WTC11 (cell line): ENCODE measurements at regions of chr1 and their contacts with region 1.

Region 1: DNA sequence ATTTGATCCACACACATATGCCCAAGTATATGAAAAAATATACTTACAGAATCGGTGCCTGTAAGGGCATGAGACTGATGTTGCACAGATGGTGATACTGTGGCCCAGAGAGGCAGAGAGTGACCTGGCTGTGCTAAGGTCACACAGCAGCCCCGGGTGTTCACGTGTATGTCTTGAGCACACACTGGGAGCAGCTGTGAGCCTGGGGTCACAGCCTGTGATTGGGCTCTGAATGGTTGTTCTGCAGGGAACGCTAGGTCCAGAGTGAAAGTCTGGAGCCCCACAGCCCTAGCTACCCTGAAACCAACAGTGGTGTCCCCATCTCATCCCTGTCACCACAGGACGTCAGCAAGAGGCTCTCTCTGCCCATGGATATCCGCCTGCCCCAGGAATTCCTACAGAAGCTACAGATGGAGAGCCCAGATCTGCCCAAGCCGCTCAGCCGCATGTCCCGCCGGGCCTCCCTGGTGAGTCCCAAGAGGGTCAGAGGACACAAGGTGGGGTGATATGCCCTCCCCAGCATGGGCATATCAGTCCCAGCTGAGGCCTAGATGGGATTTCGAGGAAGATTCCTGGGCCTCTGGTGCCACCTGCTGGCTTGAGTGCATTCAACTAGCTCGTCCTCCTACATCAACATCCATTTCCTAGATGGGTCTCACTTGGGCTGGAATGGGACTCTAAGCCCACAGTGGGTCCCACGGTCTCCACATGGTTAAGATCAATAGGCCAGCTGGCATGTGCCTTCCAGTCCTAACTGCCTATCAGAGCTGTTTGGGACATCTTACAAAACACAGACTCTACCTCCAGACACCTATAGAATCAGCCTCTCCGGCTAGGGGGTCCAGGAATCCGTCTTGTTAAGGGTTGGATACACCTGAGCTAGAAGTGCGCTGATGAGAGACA is 19.7 kb downstream of the CDK18 start:
- DNase-seq: peak; percentile 89
- ATAC-seq: peak; percentile 29
- H3K4me3 Mint-ChIP-seq: no peak overlapping the region
- H3K27ac Mint-ChIP-seq: no peak overlapping the region
- H3K4me1 Mint-ChIP-seq: peaks cover 45% of the 10 kb centered on the region
- H3K27me3 Mint-ChIP-seq: no peaks in the 10 kb centered on the region; the same call in none of the 2 replicates
- CTCF ChIP-seq: peak; percentile 81

Region 2: GRCh38 chr1:205273551-205273982 is 250.6 kb before region 1 on chr1:
- CTCF ChIA-PET with region 1: interaction called, 19 read pairs
- POLR2A ChIA-PET with region 1: no interaction called
- DNase-seq: peak; percentile 95
- ATAC-seq: peak; percentile 78
- H3K4me3 Mint-ChIP-seq: no peak overlapping the region
- H3K27ac Mint-ChIP-seq: peak overlapping the region; percentile 83
- H3K4me1 Mint-ChIP-seq: peaks cover 17% of the 10 kb centered on the region
- H3K27me3 Mint-ChIP-seq: no peaks in the 10 kb centered on the region
- CTCF ChIP-seq: peak; percentile 97

Region 3: GRCh38 chr1:205430696-205431305 is 93.3 kb before region 1 on chr1:
- CTCF ChIA-PET with region 1: interaction called, 12 read pairs
- POLR2A ChIA-PET with region 1: no interaction called
- DNase-seq: peak; percentile 81
- ATAC-seq: peak; percentile 83
- H3K4me3 Mint-ChIP-seq: peak overlapping the region; percentile 83
- H3K27ac Mint-ChIP-seq: no peak overlapping the region
- H3K4me1 Mint-ChIP-seq: peaks cover 31% of the 10 kb centered on the region
- H3K27me3 Mint-ChIP-seq: peaks cover 82% of the 10 kb centered on the region
- CTCF ChIP-seq: peak; percentile 81

Region 4: GRCh38 chr1:205458777-205459566 is 65.2 kb before region 1 on chr1:
- CTCF ChIA-PET with region 1: interaction called, 18 read pairs
- POLR2A ChIA-PET with region 1: interaction called, 5 read pairs
- DNase-seq: peak; percentile 79
- ATAC-seq: peak; percentile 16; the same call in 1 of the 2 replicates
- H3K4me3 Mint-ChIP-seq: no peak overlapping the region
- H3K27ac Mint-ChIP-seq: no peak overlapping the region
- H3K4me1 Mint-ChIP-seq: peaks cover 23% of the 10 kb centered on the region
- H3K27me3 Mint-ChIP-seq: peaks cover 4% of the 10 kb centered on the region
- CTCF ChIP-seq: no peak

Region 5: DNA sequence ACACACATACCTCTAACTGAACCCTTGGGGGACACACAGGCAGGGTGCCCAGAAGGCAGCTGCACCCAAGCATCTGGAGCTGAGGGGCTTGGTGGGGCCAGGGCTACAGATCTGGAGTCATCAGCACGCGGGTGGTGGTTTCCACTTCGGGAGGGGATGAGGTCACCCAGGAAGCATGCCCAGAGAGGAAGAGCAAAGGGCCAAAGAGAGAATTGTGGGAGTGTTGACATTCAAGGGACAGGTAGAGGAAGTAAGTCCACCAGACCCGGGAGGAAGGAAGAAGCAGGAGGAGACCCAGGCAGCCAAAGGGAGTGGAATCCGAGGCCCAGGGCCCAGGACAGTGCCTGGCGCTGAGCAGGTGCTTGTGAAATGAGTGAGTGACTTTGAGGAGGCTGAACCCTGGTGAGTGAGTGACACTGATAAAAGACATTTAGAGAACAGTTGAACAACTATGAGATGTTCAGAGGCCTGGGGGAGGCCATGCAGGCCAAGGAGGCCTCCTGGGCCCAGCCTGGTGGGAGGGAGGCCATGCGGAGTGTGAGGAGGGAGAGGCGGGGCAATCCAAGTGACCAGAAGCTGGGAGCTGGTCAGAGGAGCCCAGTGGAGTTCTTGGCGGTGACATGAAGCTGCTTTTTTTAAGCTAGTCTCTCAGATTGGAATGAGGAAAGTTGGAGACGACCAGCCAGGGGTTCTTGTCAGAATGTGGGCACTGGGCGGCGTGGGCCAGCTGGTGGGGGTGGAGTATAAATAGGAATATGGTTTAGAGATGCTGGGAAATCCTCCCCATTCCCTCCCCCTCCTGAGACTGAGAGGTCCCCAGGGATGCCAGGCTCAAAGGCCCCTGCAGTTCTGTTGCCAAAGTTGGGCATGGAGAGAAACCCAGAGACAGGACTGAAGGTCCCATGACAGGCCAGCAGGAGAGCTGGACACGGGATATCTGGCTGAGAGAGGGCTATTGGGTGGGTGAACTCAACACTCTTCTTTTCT is 11.8 kb before region 1 on chr1:
- CTCF ChIA-PET with region 1: interaction called, 56 read pairs
- POLR2A ChIA-PET with region 1: no interaction called
- DNase-seq: no peak
- ATAC-seq: no peak
- H3K4me3 Mint-ChIP-seq: no peak overlapping the region
- H3K27ac Mint-ChIP-seq: peak overlapping the region; percentile 51
- H3K4me1 Mint-ChIP-seq: peaks cover 53% of the 10 kb centered on the region
- H3K27me3 Mint-ChIP-seq: no peaks in the 10 kb centered on the region
- CTCF ChIP-seq: no peak

Region 6: GRCh38 chr1:205568469-205569361 is 44.6 kb after region 1 on chr1:
- CTCF ChIA-PET with region 1: interaction called, 10 read pairs
- POLR2A ChIA-PET with region 1: no interaction called
- DNase-seq: no peak
- ATAC-seq: peak; percentile 19
- H3K4me3 Mint-ChIP-seq: peak overlapping the region; percentile 68
- H3K27ac Mint-ChIP-seq: no peak overlapping the region
- H3K4me1 Mint-ChIP-seq: peaks cover 12% of the 10 kb centered on the region
- H3K27me3 Mint-ChIP-seq: peaks cover 77% of the 10 kb centered on the region
- CTCF ChIP-seq: no peak

Region 7: DNA sequence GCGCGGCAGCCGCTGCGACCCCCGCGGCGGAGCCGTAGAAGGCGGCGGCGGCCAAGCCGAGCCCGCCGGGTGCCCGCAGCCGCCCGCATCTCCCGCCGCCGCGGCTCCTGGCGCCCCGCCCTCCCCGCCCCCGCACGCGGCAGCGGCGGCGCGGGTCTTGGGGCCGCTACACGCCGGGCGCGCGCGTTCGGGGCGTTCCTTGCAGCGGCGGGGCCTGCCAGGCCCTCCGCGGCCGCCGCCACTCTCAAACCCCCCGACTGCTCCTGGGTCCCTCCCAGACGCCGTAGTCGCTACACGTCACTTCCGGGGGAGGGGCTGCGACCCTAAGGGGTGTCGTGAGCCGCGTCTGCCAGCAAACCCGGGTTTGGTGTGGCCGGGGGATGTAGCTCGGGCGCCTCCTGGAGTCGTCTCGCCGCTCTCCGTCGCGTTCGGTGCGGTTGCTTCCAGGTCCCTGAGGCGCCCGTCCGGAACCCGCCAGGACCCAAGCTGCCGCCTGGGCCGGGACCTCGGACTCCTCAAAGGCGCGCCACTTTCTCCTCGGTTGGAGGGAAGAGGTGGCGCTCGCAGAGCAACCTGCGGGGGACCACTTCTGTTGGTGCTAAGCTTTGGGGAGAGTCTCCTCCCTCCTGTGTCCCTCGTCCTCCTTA is 107.7 kb after region 1 on chr1 and contains the start of gene ELK4:
- CTCF ChIA-PET with region 1: interaction called, 11 read pairs
- POLR2A ChIA-PET with region 1: interaction called, 4 read pairs
- DNase-seq: peak; percentile 99
- ATAC-seq: peak; percentile 89
- H3K4me3 Mint-ChIP-seq: peak within 1 kb of the TSS; percentile 96
- H3K27ac Mint-ChIP-seq: peak within 1 kb of the TSS; percentile 100
- H3K4me1 Mint-ChIP-seq: peaks cover 27% of the 10 kb centered on the region
- H3K27me3 Mint-ChIP-seq: no peaks in the 10 kb centered on the region
- CTCF ChIP-seq: no peak
- total RNA-seq, gene ELK4: 34.4 to 39.0 TPM (median 37.5 TPM) in 3 replicates

Region 8: DNA sequence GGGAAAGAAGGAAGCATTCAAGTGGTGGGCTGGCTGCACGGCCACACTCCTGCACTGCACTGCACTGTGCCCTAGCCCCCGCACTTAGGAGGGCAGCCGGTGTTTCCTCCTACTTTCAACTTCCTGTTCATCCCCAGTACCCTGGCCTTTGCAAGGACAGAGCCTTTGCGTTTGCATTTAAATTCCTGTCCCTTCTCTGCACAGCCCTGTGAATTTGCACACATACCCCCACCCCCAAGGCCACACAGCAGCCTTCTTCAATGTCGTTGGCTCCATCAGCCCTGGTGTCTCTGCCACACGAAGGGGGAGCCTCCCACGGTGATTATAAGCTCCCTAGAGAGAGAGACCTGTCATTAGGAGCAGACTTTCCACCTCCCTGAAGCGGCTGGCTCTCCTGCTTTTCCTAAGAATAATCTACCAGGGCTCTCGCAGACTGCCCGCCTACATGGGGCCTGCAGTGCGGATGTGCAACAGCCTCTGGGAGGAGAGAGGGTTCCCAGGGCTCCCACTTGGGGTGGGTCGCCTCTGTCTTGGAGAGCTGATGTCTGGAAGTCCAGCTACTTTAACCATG is 169.4 kb after region 1 on chr1:
- CTCF ChIA-PET with region 1: no interaction called
- POLR2A ChIA-PET with region 1: no interaction called
- DNase-seq: no peak
- ATAC-seq: peak; percentile 53
- H3K4me3 Mint-ChIP-seq: no peak overlapping the region
- H3K27ac Mint-ChIP-seq: peak overlapping the region; percentile 24; the same call in 1 of the 2 replicates
- H3K4me1 Mint-ChIP-seq: peaks cover 20% of the 10 kb centered on the region
- H3K27me3 Mint-ChIP-seq: no peaks in the 10 kb centered on the region
- CTCF ChIP-seq: no peak